ENCODE measurements at regions of chr3 and their contacts with region 1.

Region 1: GRCh38 chr3:57856675-57857074 is 100.6 kb downstream of the SLMAP start:
- DNase-seq: peak in 1 of 5 donors; percentile 1
- H3K4me3 ChIP-seq: no peak overlapping the region
- H3K4me3 Mint-ChIP-seq: no peak overlapping the region
- H3K27ac ChIP-seq: no peak overlapping the region
- H3K27ac Mint-ChIP-seq: no peak overlapping the region
- H3K4me1 ChIP-seq: no peaks in the 10 kb centered on the region
- H3K4me1 Mint-ChIP-seq: no peaks in the 10 kb centered on the region
- H3K27me3 ChIP-seq: no peaks in the 10 kb centered on the region
- H3K27me3 Mint-ChIP-seq: no peaks in the 10 kb centered on the region

Region 2: DNA sequence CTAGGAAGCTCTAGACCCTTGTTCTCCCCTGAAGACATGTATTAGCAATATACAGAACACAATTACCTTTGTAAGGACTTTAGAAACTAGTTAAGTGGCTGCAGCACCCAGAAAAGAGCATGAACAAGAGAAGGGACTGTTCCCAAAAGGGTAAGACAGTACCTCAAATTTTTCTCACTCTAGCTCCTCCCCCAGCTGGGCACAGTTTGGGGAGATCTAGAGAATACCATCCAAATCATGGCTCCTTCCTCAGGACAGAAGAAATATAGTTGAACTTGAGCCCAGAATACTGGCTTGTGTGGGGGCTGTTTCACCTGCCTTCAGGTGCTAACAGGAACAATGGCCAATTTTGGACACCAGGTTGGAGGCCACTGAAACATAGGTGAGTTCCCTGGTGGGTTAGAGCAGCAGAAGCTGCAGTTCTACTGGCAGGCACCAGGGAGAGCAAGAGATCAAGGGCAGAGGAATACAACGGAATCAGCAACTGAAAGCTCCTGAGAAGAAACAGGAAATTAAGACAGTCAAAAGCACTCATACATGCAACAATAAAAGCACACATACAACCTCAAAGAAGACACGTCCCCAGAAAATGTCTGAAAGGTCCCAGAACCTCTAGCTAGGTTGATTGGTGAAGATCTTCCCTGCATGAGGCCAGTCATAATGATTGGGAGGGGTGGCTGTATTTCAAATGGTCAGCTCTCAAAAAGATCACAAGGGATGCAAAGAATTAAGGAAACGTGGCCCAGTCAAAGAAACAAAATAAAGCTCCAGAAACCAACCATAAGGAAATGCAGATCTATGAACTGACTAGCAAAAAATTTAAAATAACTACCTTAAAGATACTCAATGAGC is 459.3 kb before region 1 on chr3:
- CTCF ChIA-PET with region 1: interaction called, 11 read pairs
- POLR2A ChIA-PET with region 1: no interaction called
- DNase-seq: peak; percentile 14 to 67 (median 51)
- H3K4me3 ChIP-seq: no peak overlapping the region
- H3K4me3 Mint-ChIP-seq: peak overlapping the region in 5 of 7 donors; percentile 0 to 62 (median 39)
- H3K27ac ChIP-seq: no peak overlapping the region
- H3K27ac Mint-ChIP-seq: no peak overlapping the region
- H3K4me1 ChIP-seq: peaks cover 5% of the 10 kb centered on the region
- H3K4me1 Mint-ChIP-seq: peaks cover 7 to 12% (median 10%) of the 10 kb centered on the region in 3 donors
- H3K27me3 ChIP-seq: peaks cover 5% of the 10 kb centered on the region
- H3K27me3 Mint-ChIP-seq: peaks cover 7 to 20% of the 10 kb centered on the region in 2 donors